Endothelial cell of umbilical vein (primary cell): ENCODE measurements at regions of chr7 and their contacts with region 1.

Region 1: DNA sequence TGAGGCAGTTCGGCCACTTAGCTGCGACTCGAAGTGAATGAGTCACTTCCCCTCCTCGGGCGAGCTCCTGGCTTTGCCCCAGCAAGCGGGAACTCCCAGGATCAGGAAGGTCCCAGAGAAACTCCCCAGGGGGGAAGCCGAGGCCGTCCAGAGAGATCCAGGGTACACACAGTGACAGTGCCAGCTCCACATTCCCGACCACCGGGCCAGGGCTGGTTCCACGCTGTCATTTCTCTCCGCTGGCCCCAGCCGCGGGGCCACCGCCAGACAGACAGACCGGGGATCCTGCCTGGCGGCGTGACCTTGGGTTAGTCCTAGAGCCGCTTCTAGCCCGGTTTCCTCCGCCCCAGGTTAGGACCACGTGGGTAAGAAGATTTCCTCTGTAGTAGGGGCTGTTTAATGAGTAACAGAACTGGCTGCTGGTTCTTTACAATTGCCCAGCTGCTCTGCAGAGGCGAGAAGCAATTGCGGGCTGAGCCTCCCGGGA is 463 bp upstream of the UPP1 start:
- DNase-seq: no peak
- H3K4me3 ChIP-seq: peak overlapping the region; percentile 28 to 95 (median 54)
- H3K27ac ChIP-seq: peak overlapping the region; percentile 99
- H3K4me1 ChIP-seq: peaks cover 57% of the 10 kb centered on the region
- H3K27me3 ChIP-seq: no peaks in the 10 kb centered on the region
- CTCF ChIP-seq: no peak
- POLR2A ChIP-seq: peak; percentile 44

Region 2: DNA sequence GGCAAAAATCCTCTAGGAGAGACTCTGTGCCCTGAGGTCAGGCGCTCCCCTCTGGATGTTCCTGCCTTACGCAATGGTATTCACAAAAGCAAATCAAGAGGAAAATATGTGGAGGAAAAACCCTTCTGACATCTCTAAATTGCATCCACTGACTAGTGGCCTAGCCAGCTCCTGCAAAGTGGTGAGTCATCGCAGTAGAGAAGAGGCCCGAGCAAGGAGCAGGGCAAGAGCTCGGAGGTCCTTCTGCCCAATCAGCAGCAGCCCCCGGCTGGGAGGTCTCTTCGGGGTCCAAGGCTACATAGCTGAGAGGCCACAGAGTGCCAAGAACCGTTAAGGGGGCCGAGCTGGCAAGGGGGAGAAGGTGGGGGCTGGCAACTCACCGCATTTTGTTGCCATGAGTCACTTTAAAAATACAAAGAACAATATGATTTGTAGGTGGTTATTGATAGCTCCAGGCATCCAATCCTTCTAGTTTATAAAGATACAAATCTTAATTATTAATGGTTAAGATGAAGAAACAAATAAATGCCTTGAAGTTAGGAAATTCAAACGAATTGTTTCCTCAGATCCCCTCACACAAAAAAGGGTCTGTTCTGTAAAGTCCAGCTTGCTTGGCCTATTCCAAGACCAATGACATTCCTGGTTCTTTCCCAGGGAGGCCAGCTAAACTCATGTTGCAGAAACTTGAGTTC is 301.9 kb before region 1 on chr7:
- CTCF ChIA-PET with region 1: no interaction called
- POLR2A ChIA-PET with region 1: no interaction called
- dilution Hi-C with region 1: no loop called
- intact Hi-C with region 1: loop called (anchors 5 kb)
- DNase-seq: peak; percentile 98
- H3K4me3 ChIP-seq: no peak overlapping the region
- H3K27ac ChIP-seq: peak overlapping the region; percentile 100
- H3K4me1 ChIP-seq: peaks cover 51% of the 10 kb centered on the region
- H3K27me3 ChIP-seq: no peaks in the 10 kb centered on the region
- CTCF ChIP-seq: no peak
- POLR2A ChIP-seq: no peak

Region 3: DNA sequence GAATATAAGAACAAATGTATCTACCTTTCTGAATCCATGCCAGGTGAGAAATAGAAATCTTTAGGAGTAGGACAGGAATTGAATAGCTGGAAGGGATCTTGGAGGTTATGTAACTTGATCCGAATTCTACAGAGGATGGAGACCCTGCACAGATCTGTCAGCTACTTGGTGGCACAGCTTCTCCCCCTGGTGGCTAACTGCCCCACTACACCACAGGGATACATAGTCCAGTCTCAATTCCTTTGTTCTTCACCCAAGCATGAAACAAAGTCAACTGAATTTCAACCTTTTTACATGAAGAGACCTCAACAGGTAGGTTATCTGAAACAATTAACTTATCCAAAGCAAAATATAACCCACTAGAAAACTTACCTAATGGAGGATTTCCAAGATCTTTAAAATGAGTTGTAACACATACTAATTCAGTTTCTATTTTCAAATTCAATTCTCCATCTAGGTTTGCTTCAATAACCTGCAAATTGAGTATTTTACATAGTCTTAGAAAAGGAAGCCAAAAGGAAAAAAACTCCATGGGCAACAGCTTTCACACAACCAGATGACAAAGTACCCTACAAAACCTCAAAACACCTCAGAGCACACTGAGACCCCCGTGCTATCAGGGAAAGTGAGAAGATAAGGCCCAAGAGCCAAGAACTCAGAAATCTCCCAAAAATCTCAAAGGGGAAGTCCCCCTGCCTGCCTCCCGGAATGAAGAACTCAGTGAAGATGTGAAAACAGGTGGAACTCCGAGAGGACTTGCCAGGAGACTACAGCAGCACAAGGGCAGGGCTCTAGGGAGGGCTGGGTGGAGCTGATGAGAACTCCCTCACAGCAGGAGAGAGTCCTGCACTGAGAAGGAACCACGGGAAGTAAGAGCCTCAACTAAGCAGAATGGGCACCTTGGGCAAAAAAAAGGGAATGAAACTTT is 119.5 kb before region 1 on chr7:
- CTCF ChIA-PET with region 1: interaction called, 4 read pairs
- POLR2A ChIA-PET with region 1: no interaction called
- dilution Hi-C with region 1: no loop called
- intact Hi-C with region 1: loop called (anchors 1 kb)
- DNase-seq: peak; percentile 90
- H3K4me3 ChIP-seq: no peak overlapping the region
- H3K27ac ChIP-seq: peak overlapping the region; percentile 73
- H3K4me1 ChIP-seq: peaks cover 32% of the 10 kb centered on the region
- H3K27me3 ChIP-seq: no peaks in the 10 kb centered on the region
- CTCF ChIP-seq: peak; percentile 91 to 95
- POLR2A ChIP-seq: no peak

Region 4: DNA sequence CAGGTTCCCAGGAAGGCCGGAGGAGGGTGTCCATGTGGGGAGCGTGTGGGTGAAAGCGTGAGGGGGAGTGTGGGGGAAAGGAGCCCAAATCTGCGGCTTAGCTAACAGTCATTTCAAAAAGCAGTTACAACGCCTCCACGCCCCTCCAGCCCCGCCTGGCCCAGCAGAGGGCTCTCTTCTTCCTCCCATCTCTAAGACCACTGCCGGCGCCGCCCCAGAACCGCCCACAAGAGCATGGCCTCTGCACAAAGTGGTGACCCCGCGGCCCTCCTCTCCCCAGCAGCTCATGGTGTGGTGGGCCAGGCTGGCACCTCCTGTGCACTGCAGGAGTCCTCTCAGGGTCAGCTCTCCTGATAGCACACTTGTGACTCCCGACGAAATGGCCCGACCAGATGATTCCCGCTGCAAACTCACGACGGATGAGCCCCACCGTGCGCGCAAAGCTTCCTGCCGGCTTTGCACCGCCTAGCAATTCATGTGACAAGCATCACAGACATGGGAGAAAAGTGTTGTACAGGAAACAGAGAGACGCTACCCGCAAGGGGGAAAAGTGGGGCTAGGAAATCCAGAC is 96.8 kb before region 1 on chr7:
- CTCF ChIA-PET with region 1: interaction called, 19 read pairs
- POLR2A ChIA-PET with region 1: no interaction called
- dilution Hi-C with region 1: no loop called
- intact Hi-C with region 1: loop called (anchors 1 kb)
- DNase-seq: peak; percentile 64
- H3K4me3 ChIP-seq: peak overlapping the region; percentile 27 to 47 (median 34)
- H3K27ac ChIP-seq: no peak overlapping the region
- H3K4me1 ChIP-seq: peaks cover 7% of the 10 kb centered on the region
- H3K27me3 ChIP-seq: no peaks in the 10 kb centered on the region
- CTCF ChIP-seq: peak; percentile 70 to 78
- POLR2A ChIP-seq: no peak

Region 5: DNA sequence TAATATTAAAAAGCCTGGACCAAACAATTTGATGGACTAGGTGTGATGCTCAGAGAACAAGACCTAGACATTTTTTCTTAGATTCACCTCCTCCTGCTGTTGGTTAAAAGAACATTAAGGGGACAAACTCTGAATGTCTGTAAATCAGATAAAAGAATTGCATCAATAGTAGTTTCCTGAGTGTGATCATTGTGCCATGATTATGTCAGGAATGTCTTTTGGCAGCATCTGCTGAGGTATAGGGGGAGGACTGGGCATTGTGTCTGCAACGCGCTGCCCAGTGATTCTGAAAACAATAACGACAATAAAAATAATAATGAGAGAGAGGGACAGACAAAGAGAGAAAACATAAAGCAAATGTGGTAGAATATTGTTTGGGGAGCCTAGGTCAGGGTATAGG is 46.4 kb before region 1 on chr7:
- CTCF ChIA-PET with region 1: interaction called, 3 read pairs
- POLR2A ChIA-PET with region 1: no interaction called
- dilution Hi-C with region 1: no loop called
- intact Hi-C with region 1: loop called (anchors 2 kb)
- DNase-seq: peak; percentile 23
- H3K4me3 ChIP-seq: no peak overlapping the region
- H3K27ac ChIP-seq: peak overlapping the region; percentile 80
- H3K4me1 ChIP-seq: peaks cover 19% of the 10 kb centered on the region
- H3K27me3 ChIP-seq: peaks cover under 1 to 3% of the 10 kb centered on the region in 2 experiments
- CTCF ChIP-seq: no peak
- POLR2A ChIP-seq: no peak

Region 6: GRCh38 chr7:48458701-48459524 is 370.3 kb after region 1 on chr7:
- CTCF ChIA-PET with region 1: no interaction called
- POLR2A ChIA-PET with region 1: no interaction called
- dilution Hi-C with region 1: no loop called
- intact Hi-C with region 1: no loop called
- DNase-seq: no peak
- H3K4me3 ChIP-seq: no peak overlapping the region
- H3K27ac ChIP-seq: no peak overlapping the region
- H3K4me1 ChIP-seq: no peaks in the 10 kb centered on the region
- H3K27me3 ChIP-seq: no peaks in the 10 kb centered on the region
- CTCF ChIP-seq: no peak
- POLR2A ChIP-seq: no peak